CD8-positive, alpha-beta memory T cell (primary cell): ENCODE measurements at regions of chr2 and their contacts with region 1.

Region 1: DNA sequence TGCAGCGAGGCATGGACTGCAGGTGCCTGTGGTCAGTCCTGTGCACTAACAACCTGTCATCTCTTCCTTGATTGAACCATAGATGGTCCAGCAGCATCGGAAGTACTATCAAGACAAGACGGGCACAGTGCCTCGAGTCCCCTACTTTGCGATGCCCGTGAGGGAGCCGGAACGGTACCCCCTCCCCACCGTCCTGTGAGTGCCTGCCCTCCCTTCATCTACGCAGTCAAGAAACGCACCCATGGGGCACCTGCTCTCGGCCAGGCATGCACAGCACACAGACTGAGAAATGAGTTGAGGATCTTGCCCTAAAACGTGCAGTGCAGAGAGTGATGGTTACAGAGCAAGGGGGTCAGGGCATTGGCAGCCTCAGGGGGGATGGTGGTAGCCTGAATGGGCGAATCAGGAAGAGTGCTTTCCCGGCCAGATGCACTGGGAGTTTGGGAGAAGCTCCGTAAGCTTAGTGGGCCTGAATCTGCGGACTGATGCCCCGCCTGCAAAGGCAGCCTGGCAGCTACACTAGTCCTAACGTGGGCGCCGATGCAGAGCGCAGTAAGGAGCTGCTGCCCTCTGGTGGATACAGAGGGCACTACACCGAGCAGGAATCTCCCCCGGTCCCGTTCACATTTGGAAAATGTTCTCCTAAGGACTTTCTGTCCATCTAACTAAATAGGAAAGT is 63.6 kb downstream of the CIB4 start:
- DNase-seq: peak; percentile 29 to 66 (median 40)
- H3K4me3 ChIP-seq: no peak overlapping the region
- H3K4me3 Mint-ChIP-seq: no peak overlapping the region
- H3K27ac ChIP-seq: no peak overlapping the region
- H3K27ac Mint-ChIP-seq: no peak overlapping the region
- H3K4me1 ChIP-seq: no peaks in the 10 kb centered on the region
- H3K4me1 Mint-ChIP-seq: peaks cover 0 to 4% (median 2%) of the 10 kb centered on the region in 3 donors
- H3K27me3 ChIP-seq: no peaks in the 10 kb centered on the region
- H3K27me3 Mint-ChIP-seq: peaks cover 10 to 50% of the 10 kb centered on the region in 2 donors

Region 2: DNA sequence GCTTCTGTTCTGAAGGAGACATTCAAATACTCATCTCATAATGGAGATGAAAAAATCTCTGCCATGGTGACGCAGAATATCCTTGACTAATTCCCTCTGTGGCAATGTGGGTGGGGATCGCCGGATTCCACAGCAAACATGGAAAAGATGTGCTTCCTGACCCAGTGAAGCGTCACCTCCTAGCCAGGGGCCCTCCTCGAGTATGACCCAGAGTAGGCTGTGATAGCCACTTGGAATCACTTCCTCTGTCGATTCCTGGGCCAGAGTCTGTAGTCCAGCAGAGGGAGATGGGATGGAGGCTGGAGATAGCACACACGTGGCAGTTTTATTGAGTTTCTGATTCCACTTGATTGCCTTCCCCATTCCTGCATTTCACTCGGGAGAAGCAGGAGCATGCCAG is 139.0 kb before region 1 on chr2:
- CTCF ChIA-PET with region 1: no interaction called
- POLR2A ChIA-PET with region 1: no interaction called
- DNase-seq: no peak
- H3K4me3 ChIP-seq: no peak overlapping the region
- H3K4me3 Mint-ChIP-seq: no peak overlapping the region
- H3K27ac ChIP-seq: no peak overlapping the region
- H3K27ac Mint-ChIP-seq: no peak overlapping the region
- H3K4me1 ChIP-seq: no peaks in the 10 kb centered on the region
- H3K4me1 Mint-ChIP-seq: no peaks in the 10 kb centered on the region
- H3K27me3 ChIP-seq: no peaks in the 10 kb centered on the region
- H3K27me3 Mint-ChIP-seq: peaks cover 4 to 5% of the 10 kb centered on the region in 2 donors

Region 3: DNA sequence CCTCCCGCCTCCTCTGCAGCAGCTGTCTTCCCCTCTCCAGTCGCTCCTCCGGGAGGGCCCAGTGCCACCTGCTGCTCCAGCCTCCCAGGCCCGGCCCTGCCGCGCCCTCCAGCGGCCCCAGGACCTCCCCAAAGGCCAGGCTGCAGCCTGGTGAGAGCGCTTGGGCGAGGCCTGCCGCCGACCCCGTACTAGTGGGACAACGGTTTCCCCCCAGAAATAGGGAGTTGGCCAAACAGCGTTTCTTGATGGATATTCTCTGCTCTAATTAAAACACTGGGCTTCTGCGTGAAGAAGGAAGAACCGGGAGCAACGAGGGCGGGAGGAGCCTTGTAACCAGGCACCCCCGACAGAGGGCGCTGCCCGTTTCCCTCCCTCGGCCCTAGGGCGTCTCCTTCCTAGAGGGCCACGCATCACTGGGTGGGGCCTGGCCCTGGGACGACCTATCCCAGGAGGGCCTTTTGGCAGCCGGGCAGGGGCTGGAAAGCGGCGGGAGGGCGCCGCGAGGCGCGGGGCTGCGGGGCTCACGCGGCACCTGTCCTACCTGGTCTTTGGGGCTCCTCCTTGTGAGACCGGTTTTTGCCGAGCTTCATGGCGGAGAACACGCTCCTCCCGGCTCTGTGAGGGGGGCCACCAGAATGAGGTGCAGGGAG is 74.2 kb before region 1 on chr2:
- CTCF ChIA-PET with region 1: interaction called, 10 read pairs
- POLR2A ChIA-PET with region 1: no interaction called
- DNase-seq: peak; percentile 61 to 81 (median 67)
- H3K4me3 ChIP-seq: peak overlapping the region; percentile 47
- H3K4me3 Mint-ChIP-seq: peak overlapping the region; percentile 74 to 89 (median 81)
- H3K27ac ChIP-seq: peak overlapping the region; percentile 32
- H3K27ac Mint-ChIP-seq: peak overlapping the region in 3 of 8 donors; percentile 17 to 89 (median 63)
- H3K4me1 ChIP-seq: peaks cover 6% of the 10 kb centered on the region
- H3K4me1 Mint-ChIP-seq: peaks cover 3 to 10% (median 8%) of the 10 kb centered on the region in 3 donors
- H3K27me3 ChIP-seq: peaks cover 3% of the 10 kb centered on the region
- H3K27me3 Mint-ChIP-seq: peaks cover 0 to 9% of the 10 kb centered on the region in 2 donors

Region 4: GRCh38 chr2:26530696-26531095 is 46.9 kb before region 1 on chr2:
- CTCF ChIA-PET with region 1: no interaction called
- POLR2A ChIA-PET with region 1: no interaction called
- DNase-seq: no peak
- H3K4me3 ChIP-seq: no peak overlapping the region
- H3K4me3 Mint-ChIP-seq: no peak overlapping the region
- H3K27ac ChIP-seq: no peak overlapping the region
- H3K27ac Mint-ChIP-seq: peak overlapping the region in 1 of 8 donors; percentile 57
- H3K4me1 ChIP-seq: no peaks in the 10 kb centered on the region
- H3K4me1 Mint-ChIP-seq: no peaks in the 10 kb centered on the region
- H3K27me3 ChIP-seq: no peaks in the 10 kb centered on the region
- H3K27me3 Mint-ChIP-seq: peaks cover 0 to 17% of the 10 kb centered on the region in 2 donors

Region 5: GRCh38 chr2:26587994-26588393 is 10.4 kb after region 1 on chr2:
- CTCF ChIA-PET with region 1: interaction called, 11 read pairs
- POLR2A ChIA-PET with region 1: no interaction called
- DNase-seq: no peak
- H3K4me3 ChIP-seq: no peak overlapping the region
- H3K4me3 Mint-ChIP-seq: no peak overlapping the region
- H3K27ac ChIP-seq: no peak overlapping the region
- H3K27ac Mint-ChIP-seq: no peak overlapping the region
- H3K4me1 ChIP-seq: no peaks in the 10 kb centered on the region
- H3K4me1 Mint-ChIP-seq: no peaks in the 10 kb centered on the region
- H3K27me3 ChIP-seq: no peaks in the 10 kb centered on the region
- H3K27me3 Mint-ChIP-seq: peaks cover 22 to 42% of the 10 kb centered on the region in 2 donors